B cell (primary cell): ENCODE measurements at regions of chr7 and their contacts with region 1.

Region 1: GRCh38 chr7:76047811-76048667 is at the starts of genes MDH2 and STYXL1:
- DNase-seq: peak; percentile 90
- ATAC-seq: peak; percentile 93
- H3K4me3 ChIP-seq: peak within 1 kb of the TSS; percentile 91 to 99 (median 99)
- H3K4me3 Mint-ChIP-seq: peak within 1 kb of the TSS; percentile 94
- H3K27ac ChIP-seq: peak within 1 kb of the TSS; percentile 77 to 91
- H3K27ac Mint-ChIP-seq: peak within 1 kb of the TSS; percentile 93
- H3K4me1 ChIP-seq: peaks cover 14 to 16% of the 10 kb centered on the region in 2 donors
- H3K4me1 Mint-ChIP-seq: peaks cover 44% of the 10 kb centered on the region
- H3K27me3 ChIP-seq: no peaks in the 10 kb centered on the region
- H3K27me3 Mint-ChIP-seq: no peaks in the 10 kb centered on the region
- CTCF ChIP-seq: no peak
- total RNA-seq, gene MDH2: 77.1 and 77.2 TPM in 2 replicates
- total RNA-seq, gene STYXL1: 15.2 and 17.8 TPM in 2 replicates

Region 2: GRCh38 chr7:75694638-75695399 is 353.2 kb before region 1 on chr7:
- CTCF ChIA-PET with region 1: no interaction called
- POLR2A ChIA-PET with region 1: no interaction called
- intact Hi-C with region 1: no loop called
- DNase-seq: no peak
- ATAC-seq: no peak
- H3K4me3 ChIP-seq: no peak overlapping the region
- H3K4me3 Mint-ChIP-seq: no peak overlapping the region
- H3K27ac ChIP-seq: no peak overlapping the region
- H3K27ac Mint-ChIP-seq: no peak overlapping the region
- H3K4me1 ChIP-seq: peaks cover 12 to 19% of the 10 kb centered on the region in 2 donors
- H3K4me1 Mint-ChIP-seq: peaks cover 36% of the 10 kb centered on the region
- H3K27me3 ChIP-seq: no peaks in the 10 kb centered on the region
- H3K27me3 Mint-ChIP-seq: no peaks in the 10 kb centered on the region
- CTCF ChIP-seq: no peak

Region 3: GRCh38 chr7:75727881-75728592 is 320.0 kb before region 1 on chr7:
- CTCF ChIA-PET with region 1: no interaction called
- POLR2A ChIA-PET with region 1: no interaction called
- intact Hi-C with region 1: no loop called
- DNase-seq: no peak
- ATAC-seq: peak; percentile 21
- H3K4me3 ChIP-seq: no peak overlapping the region
- H3K4me3 Mint-ChIP-seq: peak overlapping the region; percentile 7
- H3K27ac ChIP-seq: peak overlapping the region in 1 of 2 donors; percentile 67
- H3K27ac Mint-ChIP-seq: peak overlapping the region; percentile 61
- H3K4me1 ChIP-seq: peaks cover 33 to 61% of the 10 kb centered on the region in 2 donors
- H3K4me1 Mint-ChIP-seq: peaks cover 46% of the 10 kb centered on the region
- H3K27me3 ChIP-seq: no peaks in the 10 kb centered on the region
- H3K27me3 Mint-ChIP-seq: no peaks in the 10 kb centered on the region
- CTCF ChIP-seq: no peak

Region 4: GRCh38 chr7:75994388-75995051 is 53.5 kb before region 1 on chr7 and contains the start of gene TMEM120A:
- CTCF ChIA-PET with region 1: no interaction called
- POLR2A ChIA-PET with region 1: interaction called, 3 read pairs
- intact Hi-C with region 1: loop called (anchors 2 kb)
- DNase-seq: peak; percentile 93
- ATAC-seq: peak; percentile 99
- H3K4me3 ChIP-seq: peak within 1 kb of the TSS; percentile 17 to 94 (median 90)
- H3K4me3 Mint-ChIP-seq: peak within 1 kb of the TSS; percentile 80
- H3K27ac ChIP-seq: peak within 1 kb of the TSS in 1 of 2 donors; percentile 70
- H3K27ac Mint-ChIP-seq: peak within 1 kb of the TSS; percentile 67
- H3K4me1 ChIP-seq: peaks cover 8 to 22% of the 10 kb centered on the region in 2 donors
- H3K4me1 Mint-ChIP-seq: peaks cover 36% of the 10 kb centered on the region
- H3K27me3 ChIP-seq: no peaks in the 10 kb centered on the region
- H3K27me3 Mint-ChIP-seq: no peaks in the 10 kb centered on the region
- CTCF ChIP-seq: no peak
- total RNA-seq, gene TMEM120A: 49.3 and 52.6 TPM in 2 replicates

Region 5: DNA sequence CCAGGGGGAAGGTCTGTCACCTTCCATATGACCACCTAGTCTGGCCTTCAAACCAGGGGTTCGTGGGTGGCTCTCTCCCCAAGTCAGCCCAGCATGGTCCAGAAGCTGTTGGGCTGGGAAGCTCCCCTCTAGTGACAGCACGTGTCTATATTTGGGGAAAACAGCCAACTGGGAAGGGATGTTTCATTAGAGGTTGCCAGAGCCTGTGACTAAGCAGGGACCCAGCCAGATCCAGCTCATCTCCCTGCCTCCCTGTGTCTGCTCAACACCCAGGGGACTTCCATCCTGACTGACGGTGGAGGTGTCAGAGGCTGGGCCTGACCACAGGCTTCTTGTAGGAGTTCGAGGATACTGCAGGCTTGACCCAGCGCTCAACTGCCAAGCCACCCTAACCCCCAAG is 10.7 kb before region 1 on chr7:
- CTCF ChIA-PET with region 1: no interaction called
- POLR2A ChIA-PET with region 1: no interaction called
- intact Hi-C with region 1: no loop called
- DNase-seq: no peak
- ATAC-seq: no peak
- H3K4me3 ChIP-seq: no peak overlapping the region
- H3K4me3 Mint-ChIP-seq: no peak overlapping the region
- H3K27ac ChIP-seq: no peak overlapping the region
- H3K27ac Mint-ChIP-seq: no peak overlapping the region
- H3K4me1 ChIP-seq: no peaks in the 10 kb centered on the region
- H3K4me1 Mint-ChIP-seq: peaks cover 1% of the 10 kb centered on the region
- H3K27me3 ChIP-seq: no peaks in the 10 kb centered on the region
- H3K27me3 Mint-ChIP-seq: no peaks in the 10 kb centered on the region
- CTCF ChIP-seq: no peak